ENCODE measurements at regions of chr19 and their contacts with region 1.

Region 1: DNA sequence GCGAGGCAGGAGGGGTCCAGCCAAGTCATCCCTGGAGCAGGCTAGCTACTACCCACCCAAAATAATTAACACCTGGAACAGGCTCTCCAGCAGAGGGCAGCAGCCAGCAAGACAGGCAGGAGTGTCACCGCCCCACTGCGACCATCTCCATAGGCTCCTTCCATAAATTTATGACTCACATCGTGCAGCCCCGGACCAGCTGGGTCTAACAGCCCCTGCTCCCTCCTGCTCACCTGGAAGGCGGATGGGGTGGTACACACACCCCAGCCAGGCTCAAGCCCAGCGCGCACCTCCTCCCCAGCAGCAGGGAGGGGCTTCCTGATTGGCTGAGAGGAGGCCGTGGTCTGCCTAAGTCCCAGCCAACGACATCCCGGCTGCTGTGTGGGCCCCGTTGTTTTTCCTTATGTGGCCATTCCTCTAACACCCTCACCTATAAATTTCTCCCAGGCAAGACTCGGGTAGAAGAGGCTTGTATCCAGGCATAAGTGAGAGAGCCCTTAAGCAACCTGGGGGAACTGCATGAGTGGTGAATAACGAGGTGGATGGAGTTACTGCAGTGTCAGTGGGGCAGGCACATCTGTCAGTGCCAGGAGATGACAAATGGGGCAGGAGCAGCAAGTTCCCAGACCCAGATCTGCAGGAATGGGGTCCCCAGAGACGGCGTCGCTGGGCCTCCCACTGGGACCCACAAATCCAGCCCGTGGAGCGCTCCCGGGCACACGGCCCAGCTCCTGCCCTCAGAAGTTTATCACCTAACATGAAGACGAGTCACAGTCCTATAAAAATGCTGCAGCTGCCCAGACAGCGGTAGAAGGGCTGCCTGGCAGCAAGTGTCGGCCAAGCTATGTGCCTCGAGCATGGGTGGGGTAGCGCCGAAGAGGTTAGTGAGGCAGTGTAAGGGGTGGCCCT is 43.1 kb downstream of the CEBPG start:
- DNase-seq: peak; percentile 41
- H3K4me3 ChIP-seq: no peak overlapping the region
- CTCF ChIP-seq: peak; percentile 78

Region 2: GRCh38 chr19:33363476-33363875 is 53.1 kb before region 1 on chr19:
- in situ Hi-C with region 1: loop called (anchors 5 kb)
- DNase-seq: no peak
- H3K4me3 ChIP-seq: no peak overlapping the region
- CTCF ChIP-seq: no peak

Region 3: GRCh38 chr19:33720691-33721682 is 304.4 kb after region 1 on chr19:
- in situ Hi-C with region 1: loop called (anchors 10 kb)
- DNase-seq: no peak
- H3K4me3 ChIP-seq: no peak overlapping the region
- CTCF ChIP-seq: no peak

Region 4: DNA sequence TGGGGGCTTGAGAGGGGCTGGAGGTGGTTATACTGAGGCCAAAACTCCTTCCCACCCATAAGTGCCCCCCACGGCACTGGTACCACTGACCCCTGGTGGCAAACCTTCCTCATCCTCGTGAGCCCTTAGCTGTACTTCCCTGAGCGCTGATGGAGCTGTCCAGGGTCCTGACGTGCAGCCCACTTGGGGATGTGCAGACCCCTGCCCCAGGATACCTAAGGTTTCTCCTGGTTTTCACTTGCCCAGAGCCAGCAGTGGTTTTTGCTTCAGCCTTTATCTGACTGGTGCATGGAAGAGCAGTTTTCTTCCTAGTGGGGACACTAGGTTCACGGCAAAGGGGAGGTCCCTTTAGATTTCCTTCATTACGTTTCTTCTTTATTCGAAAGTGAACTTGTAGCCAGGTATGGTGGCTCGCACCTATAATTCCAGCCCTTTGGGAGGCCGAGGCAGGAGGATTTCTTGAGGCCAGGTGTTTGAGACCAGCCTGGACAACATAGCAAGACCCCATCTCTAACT is 351.4 kb after region 1 on chr19:
- in situ Hi-C with region 1: loop called (anchors 5 kb)
- DNase-seq: no peak
- H3K4me3 ChIP-seq: no peak overlapping the region
- CTCF ChIP-seq: peak; percentile 32

Region 5: GRCh38 chr19:33795370-33796163 is 379.0 kb after region 1 on chr19:
- in situ Hi-C with region 1: loop called (anchors 10 kb)
- DNase-seq: peak; percentile 60
- H3K4me3 ChIP-seq: peak overlapping the region; percentile 65
- CTCF ChIP-seq: peak; percentile 67